Activated CD4-positive, alpha-beta memory T cell treated with anti-CD3 and anti-CD28 coated beads for 36 hours (primary cell): ENCODE measurements at regions of chr9 and their contacts with region 1.

Region 1: DNA sequence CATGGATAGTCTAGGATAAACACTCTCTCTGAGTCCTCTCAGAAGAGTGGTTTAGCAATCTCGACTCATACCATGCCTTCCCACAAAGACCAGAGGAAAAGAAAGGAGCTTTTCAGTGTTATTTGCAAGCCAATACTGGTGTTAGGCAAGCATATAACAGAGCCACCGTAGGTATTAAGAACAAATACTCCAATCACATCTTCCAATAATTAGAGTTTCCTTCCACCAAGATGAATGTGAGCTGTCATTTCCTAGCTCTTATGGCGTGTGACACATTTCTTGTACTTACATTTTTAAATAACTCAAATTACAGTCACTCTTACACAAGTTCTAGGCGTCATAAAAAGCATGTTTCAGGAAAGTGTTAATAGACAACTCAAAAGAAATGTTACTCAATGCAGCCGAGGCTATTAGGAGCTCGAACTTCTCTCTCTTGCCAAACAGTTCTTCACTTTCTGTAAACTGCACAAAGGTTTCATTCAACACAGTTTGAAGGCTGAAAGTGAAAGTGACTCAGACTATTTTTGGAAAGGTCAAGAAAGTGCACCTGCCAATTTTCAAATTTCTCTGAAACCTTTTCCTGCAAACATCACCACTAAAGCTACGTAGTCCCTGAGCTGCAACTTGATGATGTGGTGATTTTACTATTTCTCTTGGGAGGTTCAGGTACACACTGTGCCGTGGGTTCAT is 153.8 kb downstream of the AUH start:
- DNase-seq: no peak
- H3K4me3 Mint-ChIP-seq: peak overlapping the region; percentile 19
- H3K27ac Mint-ChIP-seq: peak overlapping the region; percentile 97
- H3K4me1 Mint-ChIP-seq: peaks cover 72% of the 10 kb centered on the region
- H3K27me3 Mint-ChIP-seq: no peaks in the 10 kb centered on the region

Region 2: DNA sequence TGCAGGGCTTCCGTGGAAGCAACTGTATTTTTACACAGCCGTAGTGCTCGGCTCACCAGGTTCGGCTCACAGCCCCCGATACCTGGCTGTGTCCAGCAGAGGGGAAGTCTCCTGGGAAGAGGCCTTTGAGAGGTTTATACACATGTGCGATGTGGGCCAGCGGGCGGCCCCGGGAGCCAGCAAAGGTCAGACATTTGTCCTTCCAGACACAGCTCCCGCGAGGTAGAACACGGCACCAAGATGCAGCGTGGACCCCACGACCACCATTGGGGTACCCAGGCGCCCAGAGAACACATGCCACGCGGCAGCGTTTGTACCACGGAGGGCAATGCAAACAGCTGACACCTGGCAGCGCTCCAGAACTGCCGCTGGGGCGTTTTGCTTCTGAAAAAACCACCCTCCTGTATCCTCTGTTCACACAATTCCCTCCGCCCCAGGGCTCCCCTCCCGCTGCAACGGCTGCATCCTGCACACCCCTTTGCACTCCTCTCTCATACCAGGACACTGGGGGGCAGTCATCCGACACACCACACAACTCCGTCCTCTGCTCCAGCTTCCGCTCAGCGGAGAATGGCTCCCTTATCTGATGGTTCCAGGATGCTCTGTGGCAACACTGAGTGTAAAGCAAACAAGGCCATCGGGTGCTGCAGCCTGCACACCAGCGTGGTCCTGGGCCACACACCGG is 170.9 kb before region 1 on chr9:
- CTCF ChIA-PET with region 1: interaction called, 5 read pairs
- POLR2A ChIA-PET with region 1: interaction called, 6 read pairs
- intact Hi-C with region 1: loop called (anchors 2 kb)
- DNase-seq: peak; percentile 86
- H3K4me3 Mint-ChIP-seq: peak overlapping the region; percentile 7
- H3K27ac Mint-ChIP-seq: peak overlapping the region; percentile 42
- H3K4me1 Mint-ChIP-seq: peaks cover 48% of the 10 kb centered on the region
- H3K27me3 Mint-ChIP-seq: peaks cover 22% of the 10 kb centered on the region

Region 3: DNA sequence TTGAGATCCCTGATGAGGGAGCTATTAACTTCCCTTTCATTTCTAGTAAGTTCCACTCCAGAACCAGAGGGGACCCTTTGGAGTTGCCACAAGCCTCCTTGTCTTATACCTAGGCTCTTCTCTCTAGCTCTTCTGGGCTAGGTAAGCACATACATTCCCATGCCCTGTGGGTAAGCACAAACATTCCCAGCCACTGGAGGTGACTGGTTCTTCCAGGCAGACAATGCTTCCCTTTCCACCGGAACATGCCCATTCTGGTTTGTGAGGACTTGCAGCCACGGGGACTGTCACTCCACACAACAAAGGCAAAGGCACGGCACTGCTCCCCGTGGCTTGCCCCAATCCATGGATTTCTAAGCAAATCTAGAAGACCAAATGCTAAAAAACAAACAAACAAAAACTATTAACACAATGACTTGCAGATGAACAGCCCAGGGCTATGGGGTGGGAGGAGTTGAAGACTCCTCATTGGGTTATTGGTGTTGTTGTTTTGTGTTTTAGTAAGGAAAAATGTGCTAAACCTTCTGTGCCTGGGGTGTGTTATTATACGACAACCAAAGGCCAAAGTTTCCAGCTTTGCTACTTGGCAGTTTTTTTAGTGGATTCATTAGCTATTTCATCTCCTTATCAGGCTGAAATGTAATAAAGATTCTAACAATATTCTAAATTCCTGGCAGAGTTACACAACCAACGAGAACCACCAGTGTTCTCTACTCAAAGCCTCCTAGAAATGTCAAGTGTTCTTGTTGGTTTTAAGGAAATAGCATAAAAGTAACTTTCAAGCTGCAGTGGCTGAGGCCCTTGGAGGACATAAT is 130.0 kb before region 1 on chr9:
- CTCF ChIA-PET with region 1: no interaction called
- POLR2A ChIA-PET with region 1: no interaction called
- intact Hi-C with region 1: no loop called
- DNase-seq: no peak
- H3K4me3 Mint-ChIP-seq: no peak overlapping the region
- H3K27ac Mint-ChIP-seq: no peak overlapping the region
- H3K4me1 Mint-ChIP-seq: no peaks in the 10 kb centered on the region
- H3K27me3 Mint-ChIP-seq: peaks cover 7% of the 10 kb centered on the region

Region 4: DNA sequence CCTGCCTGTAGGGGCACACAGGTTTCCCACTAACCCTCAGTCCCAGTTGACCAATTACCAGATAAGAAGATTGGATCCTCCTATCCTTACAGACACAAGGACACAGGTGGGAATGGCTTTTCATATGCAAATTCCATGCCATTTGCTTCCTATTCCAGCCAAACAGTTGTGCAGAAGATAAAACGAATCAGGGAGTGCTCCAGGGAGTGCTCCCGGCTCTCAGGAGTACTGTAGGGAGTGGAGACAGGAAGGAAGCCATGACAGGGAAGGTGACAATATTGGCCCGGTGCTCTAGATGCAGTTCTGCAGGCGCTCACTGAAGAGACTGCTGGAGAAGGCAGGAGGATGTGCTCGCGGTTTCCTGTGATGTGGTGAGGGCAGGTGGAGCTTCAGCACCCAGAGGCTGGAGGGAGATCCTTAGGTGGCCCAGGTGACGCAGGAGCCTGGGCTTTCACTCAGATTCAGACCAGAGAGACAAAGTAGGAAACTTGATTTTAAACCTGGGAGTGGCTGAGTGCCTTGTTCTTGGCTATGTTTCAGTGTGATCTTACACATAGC is 106.2 kb before region 1 on chr9:
- CTCF ChIA-PET with region 1: interaction called, 4 read pairs
- POLR2A ChIA-PET with region 1: interaction called, 14 read pairs
- intact Hi-C with region 1: loop called (anchors 1 kb)
- DNase-seq: peak; percentile 95
- H3K4me3 Mint-ChIP-seq: peak overlapping the region; percentile 73
- H3K27ac Mint-ChIP-seq: peak overlapping the region; percentile 93
- H3K4me1 Mint-ChIP-seq: peaks cover 56% of the 10 kb centered on the region
- H3K27me3 Mint-ChIP-seq: peaks cover 5% of the 10 kb centered on the region

Region 5: GRCh38 chr9:91164724-91165520 is 43.0 kb before region 1 on chr9:
- CTCF ChIA-PET with region 1: no interaction called
- POLR2A ChIA-PET with region 1: interaction called, 7 read pairs
- intact Hi-C with region 1: loop called (anchors 1 kb)
- DNase-seq: peak; percentile 88
- H3K4me3 Mint-ChIP-seq: peak overlapping the region; percentile 61
- H3K27ac Mint-ChIP-seq: peak overlapping the region; percentile 92
- H3K4me1 Mint-ChIP-seq: peaks cover 46% of the 10 kb centered on the region
- H3K27me3 Mint-ChIP-seq: no peaks in the 10 kb centered on the region

Region 6: DNA sequence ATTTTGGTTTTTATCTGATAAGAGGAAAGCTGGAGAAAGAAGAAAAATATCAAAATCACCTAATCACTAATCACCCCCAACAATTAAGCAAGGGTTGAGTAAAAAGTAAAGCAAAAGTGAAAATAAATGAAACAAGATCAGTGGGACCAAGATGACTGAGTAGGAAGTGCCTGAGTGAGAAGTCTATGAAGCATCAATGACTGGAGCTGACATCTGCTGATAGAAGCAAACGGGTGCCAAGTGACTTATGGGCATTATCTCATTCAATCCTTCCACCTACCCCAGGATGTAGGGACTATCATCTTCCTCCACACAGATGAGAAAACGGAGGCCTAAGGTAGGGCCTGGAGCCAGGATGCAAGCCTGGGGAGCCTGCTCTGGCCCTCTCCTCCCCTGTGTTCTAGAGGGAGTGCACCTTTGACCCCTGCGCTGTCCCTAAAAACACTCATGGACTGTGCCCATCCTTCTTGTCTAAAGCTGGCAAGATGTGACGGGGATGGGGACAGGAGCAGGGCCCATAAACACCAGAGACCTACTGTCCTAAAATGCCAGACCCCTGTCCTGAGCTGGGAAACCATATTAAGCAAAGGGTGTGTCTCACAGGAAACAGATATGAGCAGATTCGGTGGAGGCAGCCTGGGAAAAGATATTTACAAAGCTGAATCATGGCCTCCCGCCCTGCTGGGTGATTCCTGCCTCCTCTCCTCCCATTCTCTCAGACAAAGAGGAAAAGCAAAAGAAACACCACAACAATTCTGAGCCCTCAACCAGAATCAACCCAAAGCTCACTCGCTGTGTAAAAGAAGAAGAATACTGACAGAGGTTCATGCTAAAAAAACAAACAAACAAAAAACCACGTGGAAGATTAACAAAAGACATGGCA is 37.8 kb after region 1 on chr9:
- CTCF ChIA-PET with region 1: no interaction called
- POLR2A ChIA-PET with region 1: interaction called, 5 read pairs
- intact Hi-C with region 1: loop called (anchors 1 kb)
- DNase-seq: peak; percentile 41
- H3K4me3 Mint-ChIP-seq: no peak overlapping the region
- H3K27ac Mint-ChIP-seq: peak overlapping the region; percentile 89
- H3K4me1 Mint-ChIP-seq: peaks cover 28% of the 10 kb centered on the region
- H3K27me3 Mint-ChIP-seq: no peaks in the 10 kb centered on the region

Region 7: GRCh38 chr9:91361291-91362050 is 153.6 kb after region 1 on chr9 and contains the start of gene AUH:
- CTCF ChIA-PET with region 1: interaction called, 6 read pairs
- POLR2A ChIA-PET with region 1: interaction called, 14 read pairs
- intact Hi-C with region 1: loop called (anchors 1 kb)
- DNase-seq: peak; percentile 91
- H3K4me3 Mint-ChIP-seq: peak within 1 kb of the TSS; percentile 96
- H3K27ac Mint-ChIP-seq: peak within 1 kb of the TSS; percentile 95
- H3K4me1 Mint-ChIP-seq: peaks cover 50% of the 10 kb centered on the region
- H3K27me3 Mint-ChIP-seq: no peaks in the 10 kb centered on the region
- total RNA-seq, gene AUH: 38.8 to 40.9 TPM

Region 8: DNA sequence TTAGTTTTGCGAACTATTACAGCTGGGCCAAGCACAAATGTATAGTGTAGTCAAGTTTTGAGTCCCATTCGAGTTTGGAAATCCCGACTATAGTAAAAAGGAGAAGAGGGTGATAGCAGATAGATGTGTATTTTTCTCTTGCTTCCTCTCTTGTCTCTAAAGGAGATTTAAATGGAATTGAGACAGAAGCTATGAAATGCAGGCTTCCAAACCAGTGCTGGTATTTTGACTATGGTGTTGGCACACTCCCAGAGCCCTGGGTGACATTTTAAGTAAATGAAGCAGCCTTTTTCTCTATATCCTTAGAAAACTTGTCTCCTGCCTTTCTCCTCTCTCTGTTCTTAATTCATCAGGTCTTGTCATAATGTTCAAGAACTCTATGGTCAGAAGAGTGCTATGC is 171.6 kb after region 1 on chr9:
- CTCF ChIA-PET with region 1: no interaction called
- POLR2A ChIA-PET with region 1: no interaction called
- intact Hi-C with region 1: no loop called
- DNase-seq: no peak
- H3K4me3 Mint-ChIP-seq: no peak overlapping the region
- H3K27ac Mint-ChIP-seq: no peak overlapping the region
- H3K4me1 Mint-ChIP-seq: peaks cover 4% of the 10 kb centered on the region
- H3K27me3 Mint-ChIP-seq: peaks cover 10% of the 10 kb centered on the region